AG04449 (cell line): ENCODE measurements at regions of chr15 and their contacts with region 1.

Region 1: DNA sequence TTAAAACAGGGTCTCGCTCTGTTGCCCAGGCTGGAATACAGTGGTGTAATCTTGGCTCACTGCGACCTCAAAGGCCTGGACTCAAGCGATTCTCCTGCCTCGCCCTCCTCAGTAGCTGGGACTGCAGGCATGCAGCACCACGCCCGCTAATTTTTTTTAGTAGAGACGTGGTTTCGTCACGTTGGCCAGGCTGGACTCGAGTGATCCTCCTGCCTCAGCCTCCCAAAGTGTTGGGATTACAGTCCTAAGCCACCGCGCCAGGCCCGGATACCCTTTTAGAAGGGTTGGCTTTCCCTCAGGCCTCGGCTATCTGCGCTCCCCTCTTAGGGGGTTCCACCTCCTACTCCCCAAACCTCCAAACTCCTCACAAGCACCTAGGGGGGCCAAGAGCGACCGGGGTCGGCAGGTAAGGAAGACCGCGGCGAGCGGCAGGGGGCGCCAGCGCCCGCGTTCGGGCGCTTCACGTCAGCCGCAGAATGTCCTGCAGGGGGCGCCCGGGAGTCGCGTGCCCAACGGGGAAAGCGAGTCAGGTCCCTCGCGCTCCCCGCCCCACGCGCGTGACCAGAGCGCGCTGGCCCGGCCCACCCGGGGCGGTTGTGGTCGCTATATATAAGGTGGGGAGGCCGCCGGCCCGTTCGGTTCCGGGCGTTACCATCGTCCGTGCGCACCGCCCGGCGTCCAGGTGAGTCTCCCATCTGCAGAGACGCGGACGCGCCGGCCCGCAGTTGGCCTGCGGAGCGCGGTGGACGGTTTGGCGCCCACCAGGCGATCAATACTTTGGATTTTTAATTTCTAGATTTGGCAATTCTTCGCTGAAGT is 51.8 kb upstream of the GATM start:
- DNase-seq: no peak
- H3K4me3 ChIP-seq: peak overlapping the region; percentile 59
- CTCF ChIP-seq: peak; percentile 98

Region 2: DNA sequence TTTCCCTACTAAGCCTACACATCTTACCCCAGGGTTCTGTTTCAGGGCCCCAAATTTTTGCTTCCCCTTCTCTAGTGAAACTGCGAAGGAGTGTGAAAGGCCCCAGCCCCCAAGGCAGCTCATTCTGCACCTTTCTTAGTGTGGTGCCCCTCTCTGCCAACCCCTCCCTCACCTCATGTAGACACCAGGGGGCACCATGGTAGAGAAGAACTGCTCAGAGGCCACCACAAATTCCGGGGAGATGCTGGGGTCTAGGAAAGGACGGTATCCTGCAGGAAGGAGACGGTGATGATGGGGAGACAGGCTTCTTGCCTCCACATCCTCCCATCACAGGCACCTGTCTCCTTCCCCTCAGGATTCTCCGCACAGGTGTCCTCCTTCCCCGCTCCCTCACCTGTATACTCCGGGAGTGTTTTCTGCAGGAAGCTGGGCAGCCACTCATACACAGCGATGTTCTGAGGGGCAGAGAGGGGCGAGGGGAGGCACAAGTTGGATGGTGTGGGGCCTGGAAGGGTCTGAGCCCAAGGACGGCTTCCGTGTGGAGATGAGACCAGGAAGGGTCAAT is 319.8 kb before region 1 on chr15:
- CTCF ChIA-PET with region 1: no interaction called
- POLR2A ChIA-PET with region 1: no interaction called
- DNase-seq: no peak
- H3K4me3 ChIP-seq: no peak overlapping the region
- CTCF ChIP-seq: no peak

Region 3: DNA sequence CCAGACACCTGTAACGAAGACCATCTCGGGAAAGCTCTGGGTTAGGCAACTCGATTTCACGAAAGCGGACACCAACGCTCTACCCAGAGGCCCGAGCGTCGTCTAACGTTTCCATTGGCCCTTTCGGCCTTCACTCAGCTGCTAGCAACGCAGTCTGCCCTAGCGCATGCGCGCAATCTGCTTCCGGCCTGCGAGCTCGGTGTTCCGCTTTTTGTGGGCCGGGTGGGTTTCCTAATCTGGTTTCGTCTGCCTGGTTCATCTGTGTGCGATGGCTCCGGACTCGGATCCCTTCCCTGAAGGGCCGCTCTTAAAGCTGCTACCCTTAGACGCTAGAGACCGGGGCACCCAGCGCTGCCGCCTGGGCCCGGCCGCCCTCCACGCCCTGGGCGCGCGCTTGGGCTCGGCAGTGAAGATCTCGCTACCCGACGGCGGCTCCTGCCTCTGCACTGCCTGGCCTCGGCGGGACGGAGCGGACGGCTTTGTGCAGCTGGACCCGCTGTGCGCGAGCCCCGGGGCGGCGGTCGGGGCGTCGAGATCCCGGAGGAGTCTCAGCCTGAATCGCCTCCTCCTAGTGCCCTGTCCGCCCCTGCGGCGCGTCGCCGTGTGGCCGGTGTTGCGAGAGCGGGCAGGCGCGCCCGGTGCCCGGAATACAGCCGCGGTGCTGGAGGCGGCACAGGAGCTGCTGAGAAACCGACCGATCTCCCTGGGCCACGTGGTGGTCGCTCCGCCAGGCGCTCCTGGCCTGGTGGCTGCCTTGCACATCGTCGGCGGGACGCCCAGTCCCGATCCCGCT is 27.8 kb before region 1 on chr15:
- CTCF ChIA-PET with region 1: interaction called, 40 read pairs
- POLR2A ChIA-PET with region 1: no interaction called
- DNase-seq: peak; percentile 93
- H3K4me3 ChIP-seq: peak overlapping the region; percentile 82
- CTCF ChIP-seq: no peak

Region 4: DNA sequence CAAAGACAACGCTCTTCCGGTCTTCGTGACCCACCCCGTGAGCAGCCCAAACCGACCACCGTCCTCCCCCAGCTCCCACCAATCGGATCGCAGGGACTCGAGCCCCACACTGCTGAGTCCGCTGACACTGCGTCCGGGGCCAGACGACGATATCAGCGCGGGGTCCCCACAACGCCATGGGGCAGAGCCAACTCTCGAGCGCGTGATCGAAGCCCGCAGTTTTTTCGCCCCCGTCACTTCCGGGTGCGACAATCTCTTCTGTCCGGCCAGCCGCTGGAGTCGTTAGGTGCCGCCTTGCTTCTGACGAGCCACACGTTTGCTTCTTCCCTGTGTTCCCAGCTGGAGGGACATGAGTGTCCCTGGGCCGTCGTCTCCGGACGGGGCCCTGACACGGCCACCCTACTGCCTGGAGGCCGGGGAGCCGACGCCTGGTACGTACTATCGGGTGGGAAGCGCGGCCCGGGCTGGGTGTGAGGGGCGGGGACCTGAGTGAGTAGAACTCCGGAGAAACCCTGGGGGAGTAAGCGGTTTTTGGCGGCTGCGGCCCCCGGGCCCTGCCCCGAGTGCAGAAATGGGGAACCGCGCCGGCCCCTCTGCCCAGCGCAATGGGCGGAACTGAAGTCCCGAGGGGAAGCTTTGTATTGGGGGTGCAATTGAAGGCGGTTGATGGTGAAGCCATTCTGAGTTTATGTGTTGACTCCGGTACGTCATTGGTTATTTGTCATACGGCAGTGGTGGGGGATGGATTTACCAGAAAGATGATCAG is 157.1 kb after region 1 on chr15 and contains the start of gene BLOC1S6:
- CTCF ChIA-PET with region 1: interaction called, 21 read pairs
- POLR2A ChIA-PET with region 1: no interaction called
- DNase-seq: peak; percentile 52
- H3K4me3 ChIP-seq: peak within 1 kb of the TSS; percentile 91
- CTCF ChIP-seq: no peak

Region 5: GRCh38 chr15:45611305-45611704 is 181.1 kb after region 1 on chr15:
- CTCF ChIA-PET with region 1: interaction called, 113 read pairs
- POLR2A ChIA-PET with region 1: no interaction called
- DNase-seq: no peak
- H3K4me3 ChIP-seq: no peak overlapping the region
- CTCF ChIP-seq: peak; percentile 18

Region 6: DNA sequence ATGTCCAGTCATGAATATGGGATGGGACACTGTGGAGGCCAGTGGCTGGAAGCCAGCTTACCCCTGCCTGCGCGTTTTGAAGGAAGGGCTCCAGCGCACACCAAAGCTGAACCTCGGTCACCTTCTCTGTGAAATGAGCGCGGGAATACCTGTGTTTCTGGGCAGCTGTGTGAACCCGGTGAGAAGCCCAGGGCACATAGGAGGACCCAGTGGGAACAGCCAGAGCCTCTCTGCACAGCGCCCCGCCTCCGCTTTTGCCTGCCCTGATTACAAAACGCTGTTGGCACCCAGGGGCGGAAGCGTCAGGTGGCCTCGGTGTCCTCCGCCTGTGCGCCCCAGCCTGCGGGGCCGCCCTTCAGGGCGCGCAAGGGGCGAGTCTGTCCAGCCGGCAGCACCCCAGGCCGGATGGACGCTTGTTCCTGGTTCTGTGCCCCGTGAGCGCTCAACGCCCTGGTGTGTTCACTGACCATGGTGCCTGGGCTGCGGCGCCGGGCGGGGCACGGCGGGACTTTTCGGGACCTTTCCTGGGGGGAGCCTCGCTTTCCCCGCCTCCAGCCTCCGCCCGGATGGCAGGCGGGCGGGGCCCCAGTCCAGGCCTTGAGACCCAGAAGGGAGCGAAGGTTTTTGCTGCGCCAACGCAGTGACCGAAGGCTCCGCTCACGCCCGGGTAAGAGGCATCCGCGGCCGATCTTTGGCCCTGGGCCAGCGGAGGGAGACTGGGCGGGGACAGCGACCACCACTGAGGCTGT is 204.4 kb after region 1 on chr15 and contains the start of gene SQOR:
- CTCF ChIA-PET with region 1: interaction called, 10 read pairs
- POLR2A ChIA-PET with region 1: no interaction called
- DNase-seq: no peak
- H3K4me3 ChIP-seq: peak within 1 kb of the TSS; percentile 68
- CTCF ChIP-seq: no peak

Region 7: DNA sequence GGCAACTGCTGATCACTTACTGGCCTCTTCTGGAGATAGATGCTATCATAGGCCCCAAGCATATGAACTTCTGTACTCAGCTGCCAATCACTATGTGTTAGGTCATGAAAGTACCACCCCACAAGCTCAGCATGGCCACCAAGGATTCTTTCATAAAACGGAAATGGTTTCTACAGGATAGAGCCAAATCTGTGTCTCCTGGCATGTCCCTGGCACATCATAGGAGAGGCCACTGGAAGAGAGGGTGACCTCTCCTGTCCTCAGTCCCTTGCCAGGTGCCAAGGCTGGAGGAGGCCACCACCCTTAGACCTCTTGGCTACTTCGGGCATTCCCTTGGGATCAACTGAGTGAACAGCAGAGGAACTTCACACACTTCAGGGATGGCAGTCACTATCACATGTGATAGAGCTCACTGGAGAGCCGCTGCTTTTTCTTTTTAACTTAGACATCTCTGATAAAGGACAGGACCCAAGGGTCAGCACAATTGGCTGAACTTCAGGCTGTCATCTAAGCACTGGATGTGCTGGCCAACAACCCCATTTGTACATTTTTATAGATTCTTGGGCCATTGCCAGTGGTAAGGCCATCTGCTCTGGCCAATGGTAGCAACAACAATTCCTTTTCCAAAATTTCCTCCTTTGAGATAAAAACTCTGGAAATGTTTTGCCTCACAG is 629.9 kb after region 1 on chr15:
- CTCF ChIA-PET with region 1: no interaction called
- POLR2A ChIA-PET with region 1: no interaction called
- DNase-seq: no peak
- H3K4me3 ChIP-seq: no peak overlapping the region
- CTCF ChIP-seq: no peak